ENCODE measurements at regions of chr22 and their contacts with region 1.

Region 1: GRCh38 chr22:21791635-21792625 is 56.3 kb upstream of the YPEL1 start:
- DNase-seq: no peak
- ATAC-seq: peak; percentile 73
- H3K4me3 Mint-ChIP-seq: no peak overlapping the region
- H3K27ac Mint-ChIP-seq: peak overlapping the region; percentile 4
- H3K4me1 Mint-ChIP-seq: peaks cover 8% of the 10 kb centered on the region
- H3K27me3 Mint-ChIP-seq: no peaks in the 10 kb centered on the region
- CTCF ChIP-seq: no peak

Region 2: DNA sequence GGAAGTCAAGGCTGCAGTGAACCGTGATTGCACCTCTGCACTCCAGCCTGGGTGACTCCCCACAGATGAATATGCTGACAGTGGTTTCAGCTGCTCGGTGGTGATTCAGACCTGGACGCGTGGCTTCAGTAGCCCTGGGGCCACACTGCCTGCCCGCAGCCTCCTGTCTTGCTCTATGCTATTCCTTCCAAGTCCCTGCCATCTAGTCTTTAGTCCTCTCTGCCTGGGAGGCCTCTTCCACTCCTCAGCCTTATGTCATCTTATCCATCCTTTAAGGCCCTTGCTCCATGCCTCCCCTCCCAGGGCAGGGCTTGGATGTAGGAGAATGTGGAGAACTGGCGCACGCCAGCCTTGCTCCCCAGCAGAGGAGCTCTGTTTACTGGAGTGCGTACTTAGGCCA is 185.2 kb before region 1 on chr22:
- CTCF ChIA-PET with region 1: no interaction called
- POLR2A ChIA-PET with region 1: no interaction called
- intact Hi-C with region 1: no loop called
- DNase-seq: no peak
- ATAC-seq: no peak
- H3K4me3 Mint-ChIP-seq: no peak overlapping the region
- H3K27ac Mint-ChIP-seq: no peak overlapping the region
- H3K4me1 Mint-ChIP-seq: peaks cover 28% of the 10 kb centered on the region
- H3K27me3 Mint-ChIP-seq: no peaks in the 10 kb centered on the region
- CTCF ChIP-seq: no peak

Region 3: GRCh38 chr22:21754523-21754922 is 37.4 kb before region 1 on chr22:
- CTCF ChIA-PET with region 1: no interaction called
- POLR2A ChIA-PET with region 1: no interaction called
- intact Hi-C with region 1: loop called (anchors 1 kb)
- DNase-seq: peak; percentile 28
- ATAC-seq: peak; percentile 96
- H3K4me3 Mint-ChIP-seq: no peak overlapping the region
- H3K27ac Mint-ChIP-seq: peak overlapping the region; percentile 50
- H3K4me1 Mint-ChIP-seq: peaks cover 21% of the 10 kb centered on the region
- H3K27me3 Mint-ChIP-seq: no peaks in the 10 kb centered on the region
- CTCF ChIP-seq: no peak

Region 4: DNA sequence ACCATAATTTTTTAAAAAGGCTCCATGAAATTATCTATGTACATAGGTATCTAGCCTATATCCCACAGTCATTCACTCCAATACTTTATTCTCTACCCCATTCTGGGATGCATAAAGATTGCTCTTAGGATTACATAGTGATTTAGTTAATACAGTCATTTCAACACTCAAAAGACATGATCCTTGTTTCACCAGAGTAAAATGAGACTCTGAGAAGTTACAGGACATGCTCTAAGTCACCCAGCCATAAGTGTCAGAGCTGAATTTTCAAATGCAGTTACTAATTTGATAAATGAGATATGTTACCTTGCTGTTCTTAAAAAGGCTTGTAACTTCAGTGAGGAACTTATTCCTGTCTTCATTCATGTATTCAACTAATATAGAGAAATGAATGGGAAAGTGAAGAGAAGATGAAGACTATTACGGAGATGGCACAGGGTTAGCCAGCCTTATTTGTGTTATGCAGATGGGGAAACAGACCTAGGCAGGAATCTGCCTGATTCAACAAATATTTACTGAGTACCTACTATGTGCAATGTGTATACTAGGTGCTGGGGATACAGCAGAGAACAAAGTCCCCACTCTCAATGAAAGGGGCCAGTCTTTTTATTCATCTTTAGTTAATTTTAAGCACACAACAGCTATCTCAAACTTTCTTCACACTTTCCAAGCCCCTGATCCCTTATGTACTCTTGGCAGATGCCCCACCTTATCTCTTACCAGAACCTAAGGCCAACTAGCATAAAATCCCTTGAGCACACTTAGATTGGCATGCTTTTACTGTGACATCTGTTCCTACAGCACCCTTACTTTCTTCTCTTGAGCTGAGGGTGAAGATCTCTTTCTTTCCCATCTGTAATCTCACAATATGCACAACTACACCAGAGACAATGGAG is 53.9 kb after region 1 on chr22:
- CTCF ChIA-PET with region 1: no interaction called
- POLR2A ChIA-PET with region 1: no interaction called
- intact Hi-C with region 1: no loop called
- DNase-seq: no peak
- ATAC-seq: no peak
- H3K4me3 Mint-ChIP-seq: no peak overlapping the region
- H3K27ac Mint-ChIP-seq: no peak overlapping the region
- H3K4me1 Mint-ChIP-seq: peaks cover 56% of the 10 kb centered on the region
- H3K27me3 Mint-ChIP-seq: no peaks in the 10 kb centered on the region
- CTCF ChIP-seq: no peak

Measured in activated B cell treated with CpG ODN at 0.5 μM for 24 hours (primary cell).